Activated T-helper 1 cell treated with anti-CD3 and anti-CD28 coated beads, Interleukin-12 subunit alpha, Interleukin-12 subunit beta, Interleukin-2, Interleukin-4 antibody, amounts not matched to agents 30 ng/mL and 10 ng/mL and 1 ng/mL, durations not matched to agents 14 hours and 24 hours and 36 hours (primary cell): ENCODE measurements at regions of chr3 and their contacts with region 1.

Region 1: GRCh38 chr3:71978150-71978721 is 193.3 kb upstream of the PROK2 start:
- DNase-seq: peak; percentile 14
- H3K4me3 Mint-ChIP-seq: peak overlapping the region; percentile 53
- H3K27ac Mint-ChIP-seq: peak overlapping the region; percentile 13
- H3K4me1 Mint-ChIP-seq: peaks cover 47% of the 10 kb centered on the region
- H3K27me3 Mint-ChIP-seq: no peaks in the 10 kb centered on the region

Region 2: DNA sequence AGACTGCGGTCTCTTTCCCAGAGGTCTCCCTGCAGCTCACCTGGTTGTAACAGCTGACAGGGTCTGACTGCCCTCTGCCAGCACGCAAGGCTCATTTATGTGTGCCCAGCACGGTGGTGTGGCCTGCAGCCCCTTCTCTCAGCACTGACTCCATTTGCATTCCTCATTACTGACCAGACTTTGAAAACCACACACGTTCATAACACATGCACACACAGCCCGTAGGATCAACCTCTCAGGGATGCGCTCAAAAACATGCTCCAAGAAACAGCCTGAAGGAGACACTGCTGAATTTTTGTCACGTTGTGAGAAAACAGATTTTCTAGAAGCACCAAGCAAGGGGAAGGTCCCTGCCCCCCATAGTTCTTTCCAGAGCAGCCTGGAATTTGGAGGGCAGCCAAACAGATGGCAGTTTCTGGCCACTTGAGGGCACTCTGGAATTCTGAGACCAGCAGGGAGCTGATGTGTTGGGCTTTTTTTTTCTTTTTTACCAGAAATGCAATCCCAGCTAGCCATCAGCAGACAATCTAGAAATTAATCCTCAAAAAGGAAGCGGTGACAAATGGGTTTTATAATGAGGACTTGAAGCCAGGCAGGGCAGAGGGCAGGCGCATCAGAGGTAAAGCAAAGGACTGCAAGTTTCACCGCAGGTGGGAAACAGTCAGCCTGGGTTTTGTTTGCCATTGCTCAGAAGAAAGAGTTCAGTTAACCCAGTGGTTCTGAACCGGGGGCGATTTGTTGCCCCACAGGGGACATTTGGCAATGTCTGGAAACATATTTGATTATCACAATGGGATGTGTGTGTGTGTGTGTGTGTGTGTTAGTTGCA is 22.8 kb before region 1 on chr3:
- intact Hi-C with region 1: loop called (anchors 1 kb)
- DNase-seq: no peak
- H3K4me3 Mint-ChIP-seq: no peak overlapping the region
- H3K27ac Mint-ChIP-seq: no peak overlapping the region
- H3K4me1 Mint-ChIP-seq: peaks cover 33% of the 10 kb centered on the region
- H3K27me3 Mint-ChIP-seq: no peaks in the 10 kb centered on the region

Region 3: GRCh38 chr3:72077473-72078259 is 99.4 kb after region 1 on chr3:
- intact Hi-C with region 1: loop called (anchors 5 kb)
- DNase-seq: no peak
- H3K4me3 Mint-ChIP-seq: peak overlapping the region; percentile 40
- H3K27ac Mint-ChIP-seq: peak overlapping the region; percentile 64
- H3K4me1 Mint-ChIP-seq: peaks cover 33% of the 10 kb centered on the region
- H3K27me3 Mint-ChIP-seq: peaks cover 2% of the 10 kb centered on the region

Region 4: DNA sequence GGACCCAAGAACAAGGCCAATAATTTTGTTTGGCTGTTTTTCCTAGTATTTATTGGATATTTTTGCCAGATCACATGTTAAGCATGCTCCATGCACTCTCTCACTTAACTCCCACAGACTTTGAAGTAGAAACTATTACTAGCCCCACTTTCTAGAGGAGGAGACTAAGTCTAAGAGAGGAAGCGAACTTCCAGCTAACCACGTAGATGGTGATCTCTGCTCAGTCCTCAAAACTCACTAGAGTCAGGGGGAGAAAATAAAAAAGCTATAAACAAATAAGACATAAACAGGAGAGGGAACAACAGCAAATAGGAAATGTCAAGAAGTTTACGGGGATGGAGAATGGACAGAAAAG is 287.8 kb after region 1 on chr3:
- intact Hi-C with region 1: no loop called
- DNase-seq: no peak
- H3K4me3 Mint-ChIP-seq: no peak overlapping the region
- H3K27ac Mint-ChIP-seq: peak overlapping the region; percentile 58
- H3K4me1 Mint-ChIP-seq: peaks cover 51% of the 10 kb centered on the region
- H3K27me3 Mint-ChIP-seq: no peaks in the 10 kb centered on the region

Region 5: GRCh38 chr3:72339116-72340030 is 361.1 kb after region 1 on chr3:
- intact Hi-C with region 1: loop called (anchors 1 kb)
- DNase-seq: no peak
- H3K4me3 Mint-ChIP-seq: no peak overlapping the region
- H3K27ac Mint-ChIP-seq: no peak overlapping the region
- H3K4me1 Mint-ChIP-seq: peaks cover 32% of the 10 kb centered on the region
- H3K27me3 Mint-ChIP-seq: peaks cover under 1% of the 10 kb centered on the region

Region 6: GRCh38 chr3:72426618-72427397 is 448.6 kb after region 1 on chr3:
- intact Hi-C with region 1: loop called (anchors 5 kb)
- DNase-seq: no peak
- H3K4me3 Mint-ChIP-seq: peak overlapping the region; percentile 69
- H3K27ac Mint-ChIP-seq: peak overlapping the region; percentile 97
- H3K4me1 Mint-ChIP-seq: peaks cover 62% of the 10 kb centered on the region
- H3K27me3 Mint-ChIP-seq: no peaks in the 10 kb centered on the region

Region 7: DNA sequence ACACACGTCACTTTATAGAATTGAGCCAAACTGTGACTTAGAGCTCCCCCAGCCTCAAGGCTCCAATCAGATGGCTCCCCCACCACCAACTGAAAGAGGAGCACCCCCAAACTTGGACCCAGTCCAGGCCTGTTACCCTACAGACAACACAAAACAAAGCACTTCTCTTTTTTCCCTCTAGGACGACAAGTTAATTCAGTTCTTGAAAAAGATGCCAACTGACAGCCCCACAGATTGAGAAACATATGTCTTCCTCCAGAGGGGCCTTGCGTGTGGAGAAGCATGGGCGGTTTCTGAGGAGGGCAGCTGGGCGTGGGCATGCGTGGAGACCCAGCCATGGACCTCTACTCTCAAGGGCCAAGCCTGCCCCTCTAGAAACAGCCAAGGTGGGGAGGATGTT is 640.5 kb after region 1 on chr3:
- intact Hi-C with region 1: no loop called
- DNase-seq: no peak
- H3K4me3 Mint-ChIP-seq: no peak overlapping the region
- H3K27ac Mint-ChIP-seq: no peak overlapping the region
- H3K4me1 Mint-ChIP-seq: peaks cover 16% of the 10 kb centered on the region
- H3K27me3 Mint-ChIP-seq: no peaks in the 10 kb centered on the region

Region 8: DNA sequence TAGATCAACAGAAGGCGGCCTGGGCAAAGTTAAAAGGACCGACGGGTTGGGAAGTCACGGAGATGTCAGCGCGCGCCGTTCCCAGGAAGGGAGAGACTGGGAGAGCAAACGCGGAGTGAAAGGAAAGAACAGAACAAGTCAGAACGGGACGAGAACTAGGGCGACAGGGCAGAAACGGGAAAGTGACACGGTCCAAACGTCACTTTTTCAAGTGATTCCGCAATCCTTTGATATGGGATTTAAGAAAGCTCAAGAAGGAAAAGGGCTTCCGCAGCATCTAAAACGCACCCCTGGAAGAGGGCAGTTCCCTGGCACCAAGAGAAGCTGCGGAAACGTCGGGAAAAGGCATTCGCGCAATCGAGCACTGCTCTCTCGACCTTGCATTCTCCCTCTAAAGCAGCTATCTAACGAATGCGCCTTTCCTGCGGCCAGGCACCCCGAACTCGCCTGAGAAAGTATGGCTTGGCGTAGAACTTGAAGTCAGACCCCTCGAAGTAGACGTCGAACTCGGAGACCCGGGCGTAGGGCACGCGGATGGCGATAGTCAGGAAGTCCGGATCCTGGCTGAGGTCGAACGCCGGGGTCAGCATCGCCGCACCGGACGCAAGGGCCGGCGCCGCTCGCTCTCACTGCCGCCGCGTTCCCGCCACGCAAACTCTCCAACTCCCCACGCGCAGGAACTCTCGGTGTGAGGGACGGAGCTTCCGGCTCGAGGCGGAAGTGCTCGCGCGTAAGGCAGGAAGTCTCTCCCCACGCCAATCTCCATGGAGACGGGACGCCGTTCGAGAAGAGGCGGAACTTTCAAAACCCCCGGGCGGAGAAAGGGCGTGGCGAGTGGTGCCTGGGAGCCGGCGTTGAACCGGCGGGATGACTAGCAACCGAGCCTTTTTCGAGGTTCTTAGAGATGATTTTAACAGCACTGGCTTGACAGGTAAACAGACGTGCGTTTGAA is 869.8 kb after region 1 on chr3 and contains the start of gene SHQ1:
- intact Hi-C with region 1: loop called (anchors 1 kb)
- DNase-seq: peak; percentile 92
- H3K4me3 Mint-ChIP-seq: peak within 1 kb of the TSS; percentile 99
- H3K27ac Mint-ChIP-seq: peak within 1 kb of the TSS; percentile 88
- H3K4me1 Mint-ChIP-seq: peaks cover 62% of the 10 kb centered on the region
- H3K27me3 Mint-ChIP-seq: peaks cover 9% of the 10 kb centered on the region
- total RNA-seq, gene SHQ1: 46.1 and 48.5 TPM in 2 replicates